ENCODE measurements at regions of chr22 and their contacts with region 1.

Region 1: DNA sequence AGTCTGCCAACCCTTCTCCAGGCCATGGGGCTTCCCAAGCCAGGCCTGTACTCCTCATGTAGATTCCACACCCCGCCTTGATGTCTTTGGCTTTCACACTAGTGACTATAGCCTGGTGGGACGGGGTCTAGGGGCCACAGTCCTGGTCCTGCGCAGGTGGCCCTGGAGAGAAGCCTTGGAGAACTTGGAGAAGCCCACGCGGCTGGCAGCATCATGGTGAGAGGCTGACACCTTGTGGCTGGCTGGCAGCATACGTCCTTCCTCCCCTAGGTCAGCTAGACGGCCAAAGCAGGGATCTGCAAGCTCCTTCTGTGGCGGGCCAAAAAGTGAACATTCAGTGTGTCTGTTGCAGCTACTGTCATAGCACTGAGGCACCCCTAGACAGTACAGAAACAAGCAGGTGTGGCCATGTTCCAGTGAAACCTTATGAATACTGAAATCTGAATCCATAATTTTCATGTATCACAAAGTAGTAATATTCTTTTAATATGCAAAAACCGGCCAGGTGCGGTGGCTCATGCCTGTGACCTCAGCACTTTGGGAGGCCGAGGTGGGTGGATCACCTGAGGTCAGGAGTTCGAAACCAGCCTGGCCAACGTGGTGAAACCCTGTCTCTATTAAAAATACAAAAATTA is 42.0 kb downstream of the FAM83F start:
- DNase-seq: peak in 8 of 9 experiments; percentile 31 to 71 (median 46)
- ATAC-seq: peak; percentile 67
- H3K4me3 ChIP-seq: no peak overlapping the region
- H3K4me3 Mint-ChIP-seq: no peak overlapping the region
- H3K27ac ChIP-seq: no peak overlapping the region
- H3K27ac Mint-ChIP-seq: no peak overlapping the region
- H3K4me1 ChIP-seq: no peaks in the 10 kb centered on the region
- H3K4me1 Mint-ChIP-seq: peaks cover 10% of the 10 kb centered on the region
- H3K27me3 ChIP-seq: no peaks in the 10 kb centered on the region
- H3K27me3 Mint-ChIP-seq: peaks cover 21% of the 10 kb centered on the region
- CTCF ChIP-seq: peak; percentile 61

Region 2: GRCh38 chr22:39559454-39560105 is 477.1 kb before region 1 on chr22:
- CTCF ChIA-PET with region 1: no interaction called
- POLR2A ChIA-PET with region 1: no interaction called
- intact Hi-C with region 1: loop called in 1 of 2 experiments (anchors 5 kb)
- DNase-seq: no peak
- ATAC-seq: no peak
- H3K4me3 ChIP-seq: no peak overlapping the region
- H3K4me3 Mint-ChIP-seq: no peak overlapping the region
- H3K27ac ChIP-seq: no peak overlapping the region
- H3K27ac Mint-ChIP-seq: no peak overlapping the region
- H3K4me1 ChIP-seq: peaks cover 10% of the 10 kb centered on the region
- H3K4me1 Mint-ChIP-seq: peaks cover 6% of the 10 kb centered on the region
- H3K27me3 ChIP-seq: peaks cover 17 to 24% of the 10 kb centered on the region in 2 experiments
- H3K27me3 Mint-ChIP-seq: peaks cover 32% of the 10 kb centered on the region
- CTCF ChIP-seq: no peak